A549 (cell line): ENCODE measurements at regions of chr3 and their contacts with region 1.

Region 1: GRCh38 chr3:64030741-64031140 is 7.4 kb upstream of the PSMD6 start:
- DNase-seq: peak; percentile 80 to 88
- ATAC-seq: peak; percentile 97 to 98
- H3K4me3 ChIP-seq: no peak overlapping the region
- H3K27ac ChIP-seq: peak overlapping the region; percentile 84 to 85
- H3K4me1 ChIP-seq: peaks cover 12% of the 10 kb centered on the region
- CTCF ChIP-seq: peak; percentile 74
- EP300 ChIP-seq: 0 out of 5 replicates have a peak, but pooled peaks of 1 of the 2 experiments have one; percentile 21
- POLR2A ChIP-seq: no peak
- RAD21 ChIP-seq: peak; percentile 96 to 97

Region 2: GRCh38 chr3:64049136-64049535 is 18.4 kb after region 1 on chr3:
- CTCF ChIA-PET with region 1: interaction called, 12 read pairs
- POLR2A ChIA-PET with region 1: no interaction called
- DNase-seq: peak in 1 of 2 experiments; percentile 45
- ATAC-seq: peak; percentile 59 to 80; a peak in 4 of 6 replicates
- H3K4me3 ChIP-seq: no peak overlapping the region
- H3K27ac ChIP-seq: peak overlapping the region; percentile 53 to 78; a peak in 5 of 6 replicates
- H3K4me1 ChIP-seq: peaks cover 33% of the 10 kb centered on the region
- CTCF ChIP-seq: no peak
- EP300 ChIP-seq: no peak
- POLR2A ChIP-seq: no peak
- RAD21 ChIP-seq: no peak

Region 3: GRCh38 chr3:64062876-64063785 is 32.4 kb after region 1 on chr3:
- CTCF ChIA-PET with region 1: interaction called, 27 read pairs
- POLR2A ChIA-PET with region 1: no interaction called
- DNase-seq: peak; percentile 36 to 94
- ATAC-seq: peak; percentile 88 to 90
- H3K4me3 ChIP-seq: no peak overlapping the region
- H3K27ac ChIP-seq: peak overlapping the region; percentile 89 to 97
- H3K4me1 ChIP-seq: peaks cover 39% of the 10 kb centered on the region
- CTCF ChIP-seq: no peak
- EP300 ChIP-seq: peak; percentile 98 to 99
- POLR2A ChIP-seq: no peak
- RAD21 ChIP-seq: peak; percentile 23 to 61; a peak in 4 of 5 replicates

Region 4: DNA sequence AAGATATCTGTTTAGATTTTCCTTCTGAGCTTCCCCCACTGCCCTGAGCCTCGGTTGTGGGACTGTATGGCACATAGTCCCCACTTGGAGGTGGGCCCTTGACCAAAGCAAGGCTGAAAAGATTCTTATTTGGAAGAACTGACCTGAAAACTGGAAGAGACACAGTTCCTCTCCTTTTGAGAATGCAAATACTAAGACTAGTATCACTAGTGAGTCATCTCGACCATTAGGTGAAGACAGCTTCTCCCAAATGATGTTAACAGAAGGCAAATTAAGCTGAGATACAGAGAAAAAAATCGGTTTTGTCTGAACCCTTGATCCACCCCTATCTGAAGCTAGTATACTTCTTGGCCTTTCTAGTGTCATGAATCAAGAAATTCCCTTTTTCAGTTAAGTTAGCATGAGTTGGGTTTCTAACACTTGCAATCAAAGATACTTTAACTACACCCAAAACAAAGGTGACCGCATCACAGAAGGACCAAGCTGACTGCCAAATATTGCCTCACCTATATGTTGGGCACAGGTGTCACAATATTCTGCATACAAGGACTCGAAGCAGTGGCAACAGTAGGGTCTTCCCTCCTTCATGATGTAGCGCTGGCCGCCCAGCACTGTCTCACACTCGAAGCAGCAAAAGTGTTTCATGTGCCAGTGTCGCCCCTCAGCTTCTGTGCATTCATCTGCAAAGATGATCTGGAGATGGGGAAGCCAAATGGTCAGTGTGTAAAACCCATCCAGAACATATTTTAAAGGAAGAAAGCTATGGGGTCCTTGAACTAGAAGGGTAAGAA is 122.1 kb after region 1 on chr3:
- CTCF ChIA-PET with region 1: interaction called, 10 read pairs
- POLR2A ChIA-PET with region 1: no interaction called
- DNase-seq: no peak
- ATAC-seq: no peak
- H3K4me3 ChIP-seq: no peak overlapping the region
- H3K27ac ChIP-seq: peak overlapping the region; percentile 85 to 92
- H3K4me1 ChIP-seq: peaks cover 53% of the 10 kb centered on the region
- CTCF ChIP-seq: no peak
- EP300 ChIP-seq: no peak
- POLR2A ChIP-seq: no peak
- RAD21 ChIP-seq: no peak

Region 5: GRCh38 chr3:64187065-64187959 is 156.6 kb after region 1 on chr3:
- CTCF ChIA-PET with region 1: interaction called, 13 read pairs
- POLR2A ChIA-PET with region 1: interaction called, 4 read pairs
- DNase-seq: peak; percentile 64 to 88
- ATAC-seq: peak; percentile 83 to 84
- H3K4me3 ChIP-seq: peak overlapping the region; percentile 26; the same call in 2 of the 3 replicates
- H3K27ac ChIP-seq: peak overlapping the region; percentile 83 to 92
- H3K4me1 ChIP-seq: peaks cover 85% of the 10 kb centered on the region
- CTCF ChIP-seq: no peak
- EP300 ChIP-seq: peak in 1 of 2 experiments; percentile 59; a peak in 2 of 5 replicates
- POLR2A ChIP-seq: no peak
- RAD21 ChIP-seq: no peak

Region 6: GRCh38 chr3:64224826-64225610 is 194.3 kb after region 1 on chr3 and contains the start of gene PRICKLE2:
- CTCF ChIA-PET with region 1: interaction called, 27 read pairs
- POLR2A ChIA-PET with region 1: no interaction called
- DNase-seq: peak; percentile 69 to 90
- ATAC-seq: peak; percentile 88 to 92
- H3K4me3 ChIP-seq: peak within 1 kb of the TSS; percentile 70
- H3K27ac ChIP-seq: peak within 1 kb of the TSS; percentile 91 to 93
- H3K4me1 ChIP-seq: peaks cover 33% of the 10 kb centered on the region
- CTCF ChIP-seq: peak; percentile 37
- EP300 ChIP-seq: no peak
- POLR2A ChIP-seq: peak; percentile 19; the same call in 1 of the 2 replicates
- RAD21 ChIP-seq: peak; percentile 54 to 64
- polyA plus RNA-seq, gene PRICKLE2: 6.3 and 8.0 TPM in 2 replicates

Region 7: GRCh38 chr3:64388886-64389285 is 358.1 kb after region 1 on chr3:
- CTCF ChIA-PET with region 1: no interaction called
- POLR2A ChIA-PET with region 1: no interaction called
- DNase-seq: no peak
- ATAC-seq: no peak
- H3K4me3 ChIP-seq: no peak overlapping the region
- H3K27ac ChIP-seq: no peak overlapping the region
- H3K4me1 ChIP-seq: no peaks in the 10 kb centered on the region; the same call in 2 of the 3 replicates
- CTCF ChIP-seq: no peak
- EP300 ChIP-seq: no peak
- POLR2A ChIP-seq: no peak
- RAD21 ChIP-seq: no peak

Region 8: DNA sequence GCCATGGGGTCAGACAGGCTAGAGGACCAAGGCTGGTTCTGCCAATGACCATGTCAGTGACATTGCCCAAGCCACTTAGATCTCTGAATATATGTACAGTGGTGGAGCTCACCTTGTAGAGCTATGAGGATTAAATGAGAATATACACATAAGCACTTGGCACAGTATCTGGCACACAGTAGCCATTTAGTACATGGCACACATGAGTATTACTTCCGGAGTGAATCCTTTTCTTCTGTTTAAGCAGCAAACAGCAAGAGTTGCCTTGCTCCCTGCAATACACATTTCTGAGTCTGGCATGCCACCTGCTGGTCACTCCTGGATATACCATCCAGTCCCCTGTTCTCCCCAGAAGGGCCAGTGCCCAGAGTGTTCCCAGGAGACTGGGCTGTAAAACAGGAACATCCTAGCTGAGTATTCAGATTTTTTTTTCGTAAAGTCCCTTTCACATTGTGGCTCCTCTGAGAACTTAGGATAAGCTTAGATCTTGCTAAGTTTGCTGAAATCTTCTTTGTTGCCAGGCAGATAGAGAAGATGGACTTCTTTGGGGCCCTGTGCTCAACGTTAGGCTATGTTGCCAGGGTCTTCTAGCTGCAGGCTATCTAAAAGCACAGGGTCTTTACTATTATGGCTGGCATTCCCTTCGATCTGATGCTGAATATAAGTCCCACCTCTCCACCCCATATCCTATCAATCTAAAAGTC is 453.7 kb after region 1 on chr3:
- CTCF ChIA-PET with region 1: interaction called, 54 read pairs
- POLR2A ChIA-PET with region 1: no interaction called
- DNase-seq: peak; percentile 51 to 75
- ATAC-seq: peak; percentile 99
- H3K4me3 ChIP-seq: no peak overlapping the region
- H3K27ac ChIP-seq: peak overlapping the region; percentile 63 to 74
- H3K4me1 ChIP-seq: no peaks in the 10 kb centered on the region
- CTCF ChIP-seq: peak; percentile 86
- EP300 ChIP-seq: no peak
- POLR2A ChIP-seq: no peak
- RAD21 ChIP-seq: peak; percentile 91 to 95